Gastrocnemius medialis (tissue), 4 donors: ENCODE measurements at regions of chr1 and their contacts with region 1.

Region 1: GRCh38 chr1:205438213-205439157 is 16.6 kb upstream of the LEMD1 start:
- DNase-seq: peak; percentile 37 to 57
- ATAC-seq: peak; percentile 61 to 67
- H3K4me3 ChIP-seq: no peak overlapping the region
- H3K27ac ChIP-seq: peak overlapping the region; percentile 0 to 57 (median 27)
- H3K4me1 ChIP-seq: peaks cover 57 to 60% of the 10 kb centered on the region in 2 donors
- H3K27me3 ChIP-seq: no peaks in the 10 kb centered on the region
- CTCF ChIP-seq: peak; percentile 40 to 75 (median 60)
- POLR2A ChIP-seq: no peak

Region 2: GRCh38 chr1:205335643-205336091 is 102.8 kb before region 1 on chr1:
- in situ Hi-C with region 1: no loop called
- intact Hi-C with region 1: loop called (anchors 5 kb)
- DNase-seq: peak; percentile 45 to 64
- ATAC-seq: peak; percentile 31 to 60
- H3K4me3 ChIP-seq: no peak overlapping the region
- H3K27ac ChIP-seq: no peak overlapping the region
- H3K4me1 ChIP-seq: peaks cover 15 to 23% of the 10 kb centered on the region in 2 donors
- H3K27me3 ChIP-seq: no peaks in the 10 kb centered on the region
- CTCF ChIP-seq: peak; percentile 60 to 86 (median 77)
- POLR2A ChIP-seq: no peak

Region 3: DNA sequence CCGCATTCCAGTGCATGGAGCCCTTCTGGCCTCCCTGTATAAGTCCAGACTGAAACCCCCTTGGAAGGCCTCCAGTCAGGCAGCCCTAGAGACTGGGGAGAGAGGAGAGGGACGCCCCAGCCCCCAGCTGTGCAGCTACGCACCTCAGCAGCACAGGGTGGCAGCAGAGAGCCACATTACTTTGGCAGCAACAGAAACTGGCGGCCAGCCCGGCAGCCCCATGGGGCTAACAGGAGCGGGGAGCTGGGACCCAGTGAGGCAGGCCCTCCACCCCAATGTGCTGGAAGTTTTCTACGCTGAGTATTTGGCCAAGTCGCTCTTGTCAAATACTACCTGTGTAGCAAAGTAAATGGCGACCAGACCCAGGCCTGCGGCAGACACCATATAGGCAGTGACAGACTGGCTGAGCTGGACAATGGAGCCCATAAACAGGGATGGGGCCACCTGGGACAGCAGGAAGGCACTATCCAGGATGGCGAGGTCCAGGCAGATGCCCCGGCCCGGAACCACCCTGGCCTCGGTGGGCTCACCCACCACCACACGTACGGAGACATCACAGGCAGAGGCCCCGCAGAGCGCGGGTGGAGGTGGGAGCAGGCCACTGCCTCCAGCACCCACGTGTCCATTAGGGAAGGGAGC is 220.6 kb after region 1 on chr1:
- in situ Hi-C with region 1: no loop called
- intact Hi-C with region 1: no loop called
- DNase-seq: peak; percentile 48 to 62
- ATAC-seq: peak; percentile 68 to 71
- H3K4me3 ChIP-seq: no peak overlapping the region
- H3K27ac ChIP-seq: no peak overlapping the region
- H3K4me1 ChIP-seq: peaks cover 0 to 4% of the 10 kb centered on the region in 2 donors
- H3K27me3 ChIP-seq: no peaks in the 10 kb centered on the region
- CTCF ChIP-seq: peak; percentile 78 to 90 (median 88)
- POLR2A ChIP-seq: no peak

Region 4: GRCh38 chr1:207205614-207206061 is 1767.2 kb after region 1 on chr1:
- in situ Hi-C with region 1: no loop called
- intact Hi-C with region 1: no loop called
- DNase-seq: no peak
- ATAC-seq: no peak
- H3K4me3 ChIP-seq: no peak overlapping the region
- H3K27ac ChIP-seq: peak overlapping the region; percentile 30 to 73 (median 48)
- H3K4me1 ChIP-seq: peaks cover 0 to 3% of the 10 kb centered on the region in 2 donors
- H3K27me3 ChIP-seq: no peaks in the 10 kb centered on the region
- CTCF ChIP-seq: no peak
- POLR2A ChIP-seq: no peak